ENCODE measurements at regions of chr18 and their contacts with region 1.

Region 1: DNA sequence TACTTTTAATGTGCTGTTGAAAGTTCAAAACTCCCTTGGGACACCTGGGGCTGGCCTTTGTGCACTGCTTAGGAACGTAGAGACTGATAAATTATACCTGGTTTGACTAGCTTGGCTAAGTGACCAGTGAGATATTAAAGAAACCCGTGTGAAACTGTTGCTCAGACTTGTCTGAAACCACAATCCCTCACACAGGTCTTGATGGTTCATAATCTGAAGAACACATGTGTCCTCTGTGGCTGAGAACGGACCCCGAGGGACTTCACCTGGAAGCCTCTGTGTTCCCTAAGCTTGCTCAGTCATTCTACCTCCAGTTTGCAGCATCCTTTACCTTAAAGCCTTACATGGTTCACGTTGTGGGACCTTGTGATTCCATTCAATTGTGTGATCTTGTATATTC is 218.8 kb downstream of the CBLN2 start:
- DNase-seq: no peak
- ATAC-seq: no peak
- H3K4me3 ChIP-seq: no peak overlapping the region
- H3K4me3 Mint-ChIP-seq: no peak overlapping the region
- H3K27ac ChIP-seq: no peak overlapping the region
- H3K27ac Mint-ChIP-seq: no peak overlapping the region
- H3K4me1 ChIP-seq: no peaks in the 10 kb centered on the region
- H3K4me1 Mint-ChIP-seq: no peaks in the 10 kb centered on the region
- H3K27me3 ChIP-seq: no peaks in the 10 kb centered on the region
- H3K27me3 Mint-ChIP-seq: no peaks in the 10 kb centered on the region
- CTCF ChIP-seq: no peak

Region 2: GRCh38 chr18:72206814-72207213 is 118.5 kb before region 1 on chr18:
- CTCF ChIA-PET with region 1: no interaction called
- POLR2A ChIA-PET with region 1: no interaction called
- intact Hi-C with region 1: no loop called
- DNase-seq: no peak
- ATAC-seq: no peak
- H3K4me3 ChIP-seq: no peak overlapping the region
- H3K4me3 Mint-ChIP-seq: no peak overlapping the region
- H3K27ac ChIP-seq: no peak overlapping the region
- H3K27ac Mint-ChIP-seq: no peak overlapping the region
- H3K4me1 ChIP-seq: no peaks in the 10 kb centered on the region
- H3K4me1 Mint-ChIP-seq: no peaks in the 10 kb centered on the region
- H3K27me3 ChIP-seq: no peaks in the 10 kb centered on the region
- H3K27me3 Mint-ChIP-seq: no peaks in the 10 kb centered on the region
- CTCF ChIP-seq: no peak

Region 3: GRCh38 chr18:72360628-72361027 is 35.3 kb after region 1 on chr18:
- CTCF ChIA-PET with region 1: no interaction called
- POLR2A ChIA-PET with region 1: no interaction called
- intact Hi-C with region 1: no loop called
- DNase-seq: no peak
- ATAC-seq: no peak
- H3K4me3 ChIP-seq: no peak overlapping the region
- H3K4me3 Mint-ChIP-seq: no peak overlapping the region
- H3K27ac ChIP-seq: no peak overlapping the region
- H3K27ac Mint-ChIP-seq: no peak overlapping the region
- H3K4me1 ChIP-seq: no peaks in the 10 kb centered on the region
- H3K4me1 Mint-ChIP-seq: no peaks in the 10 kb centered on the region
- H3K27me3 ChIP-seq: no peaks in the 10 kb centered on the region
- H3K27me3 Mint-ChIP-seq: no peaks in the 10 kb centered on the region
- CTCF ChIP-seq: no peak

Region 4: DNA sequence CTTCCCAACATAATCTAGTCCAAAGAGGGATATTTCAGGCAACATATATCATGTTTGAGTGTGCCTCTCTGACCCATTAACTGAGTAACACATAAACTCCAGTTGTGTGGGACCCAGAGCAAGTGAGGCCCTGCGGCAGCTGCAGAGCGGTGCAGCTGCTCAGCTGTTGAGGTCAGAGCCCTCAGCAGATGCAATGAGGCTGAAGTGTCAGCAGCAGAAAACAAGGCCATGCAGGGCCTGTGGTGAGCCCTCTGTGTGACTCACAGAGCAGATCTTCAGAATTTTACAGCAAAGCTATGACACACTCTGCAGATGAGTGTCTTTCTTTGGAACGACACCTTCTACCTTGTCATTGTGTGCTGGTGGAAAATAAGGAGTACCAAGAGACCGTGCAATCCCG is 50.3 kb after region 1 on chr18:
- CTCF ChIA-PET with region 1: no interaction called
- POLR2A ChIA-PET with region 1: no interaction called
- intact Hi-C with region 1: loop called in 1 of 2 experiments (anchors 5 kb)
- DNase-seq: no peak
- ATAC-seq: no peak
- H3K4me3 ChIP-seq: no peak overlapping the region
- H3K4me3 Mint-ChIP-seq: no peak overlapping the region
- H3K27ac ChIP-seq: no peak overlapping the region
- H3K27ac Mint-ChIP-seq: no peak overlapping the region
- H3K4me1 ChIP-seq: no peaks in the 10 kb centered on the region
- H3K4me1 Mint-ChIP-seq: no peaks in the 10 kb centered on the region
- H3K27me3 ChIP-seq: no peaks in the 10 kb centered on the region
- H3K27me3 Mint-ChIP-seq: no peaks in the 10 kb centered on the region
- CTCF ChIP-seq: no peak